GM10248 (cell line): ENCODE measurements at regions of chr12 and their contacts with region 1.

Region 1: DNA sequence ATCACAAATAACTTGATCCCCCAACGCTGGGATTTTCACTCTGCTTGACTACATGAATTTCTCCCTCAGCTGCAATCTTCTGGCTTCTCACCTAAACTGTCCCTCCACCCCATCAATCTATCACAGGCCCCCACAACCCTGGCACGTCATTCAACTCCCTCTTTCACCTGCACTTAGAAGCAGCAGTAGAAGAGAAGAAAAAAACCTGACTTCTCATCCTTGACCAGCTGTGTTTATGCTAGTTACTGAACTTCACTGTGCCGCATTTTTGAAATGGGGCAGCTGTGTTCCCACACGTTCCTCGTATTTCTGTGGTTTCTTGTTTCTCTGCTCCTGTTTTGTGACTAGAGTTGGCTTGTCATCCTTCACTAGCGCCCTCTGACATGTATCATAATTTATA is 35.0 kb downstream of the ITPR2 start:
- DNase-seq: peak; percentile 29
- CTCF ChIP-seq: no peak

Region 2: DNA sequence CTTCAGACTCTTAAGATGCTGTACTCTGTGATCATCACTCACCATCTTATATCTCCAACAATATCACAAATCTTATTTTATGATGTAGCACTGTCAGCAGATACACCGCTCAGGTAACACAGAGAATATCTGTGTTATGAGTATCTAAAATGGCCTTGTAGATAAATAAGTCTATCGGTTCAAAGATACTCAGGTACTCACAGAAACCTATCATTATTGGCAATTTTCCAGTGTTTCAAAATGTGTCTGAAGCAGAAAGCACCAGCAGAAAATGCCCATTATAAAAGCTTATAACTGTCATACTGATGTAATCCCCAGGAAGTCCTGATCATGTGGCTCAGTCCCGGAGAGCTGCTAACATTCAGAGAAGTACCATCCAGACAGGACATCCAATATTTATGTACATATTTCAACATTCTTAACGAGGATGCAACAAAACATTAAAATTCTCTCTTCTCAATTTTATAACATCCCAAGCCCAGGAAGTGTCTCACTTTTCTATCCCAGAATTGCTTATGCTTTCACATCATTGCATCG is 1054.3 kb before region 1 on chr12:
- CTCF ChIA-PET with region 1: no interaction called
- POLR2A ChIA-PET with region 1: no interaction called
- DNase-seq: no peak
- CTCF ChIP-seq: no peak

Region 3: GRCh38 chr12:26651566-26652188 is 146.3 kb before region 1 on chr12:
- CTCF ChIA-PET with region 1: no interaction called
- POLR2A ChIA-PET with region 1: no interaction called
- DNase-seq: peak; percentile 37
- CTCF ChIP-seq: peak; percentile 42

Region 4: GRCh38 chr12:26748741-26749431 is 49.1 kb before region 1 on chr12:
- CTCF ChIA-PET with region 1: no interaction called
- POLR2A ChIA-PET with region 1: no interaction called
- DNase-seq: peak; percentile 30
- CTCF ChIP-seq: no peak

Region 5: DNA sequence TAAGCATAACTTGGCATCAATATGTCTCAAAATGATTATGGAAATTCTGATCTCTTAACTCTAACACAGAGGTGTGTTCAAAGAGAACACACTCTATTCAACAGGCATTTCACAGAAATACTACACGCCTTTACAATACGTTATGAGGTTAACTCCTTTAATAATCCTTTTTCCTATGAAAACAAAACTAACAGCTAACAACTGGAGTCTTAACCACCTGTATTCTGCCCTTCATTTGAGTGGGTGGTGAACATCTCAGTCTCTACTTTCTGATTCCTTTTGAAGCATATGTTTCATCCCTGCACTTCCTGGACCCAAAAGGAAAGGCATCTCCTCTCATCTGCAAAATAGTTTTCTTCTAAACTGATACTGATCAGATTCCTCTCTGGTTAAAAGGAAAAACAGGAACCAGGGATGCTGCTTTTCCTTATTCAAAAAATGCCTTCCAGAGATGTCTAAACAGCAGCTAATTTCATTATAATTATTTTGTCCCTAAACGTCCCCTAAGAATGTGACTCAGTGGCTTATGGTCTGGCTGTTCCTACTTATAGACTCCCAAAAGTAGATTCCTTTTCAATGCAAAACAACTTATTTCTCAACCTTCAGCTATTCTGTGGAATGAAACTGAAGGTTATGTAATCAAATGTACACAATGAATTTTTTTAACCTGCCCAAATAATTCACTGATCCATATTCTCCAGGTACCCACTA is 10.9 kb after region 1 on chr12:
- CTCF ChIA-PET with region 1: interaction called, 12 read pairs
- POLR2A ChIA-PET with region 1: no interaction called
- DNase-seq: no peak
- CTCF ChIP-seq: no peak

Region 6: DNA sequence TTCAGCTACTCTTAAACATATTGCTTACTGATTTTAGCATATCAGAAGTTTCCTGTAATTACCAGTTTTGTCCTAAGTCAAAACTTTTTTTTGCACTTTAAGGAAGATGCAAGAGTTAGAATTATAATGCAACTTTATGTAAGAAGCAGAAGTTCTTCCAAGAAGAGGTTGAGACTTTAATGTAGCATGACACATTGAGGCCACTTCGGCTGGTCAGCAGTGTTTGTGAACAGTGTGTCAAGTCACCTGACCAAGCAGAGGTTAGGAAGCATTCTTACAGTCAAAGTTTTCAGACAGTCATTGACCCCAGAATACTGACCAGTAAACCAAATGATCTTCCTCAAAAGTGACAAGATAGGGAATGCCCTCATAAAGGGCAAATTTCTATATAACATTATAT is 155.4 kb after region 1 on chr12:
- CTCF ChIA-PET with region 1: no interaction called
- POLR2A ChIA-PET with region 1: no interaction called
- DNase-seq: no peak
- CTCF ChIP-seq: no peak